Caco-2 (cell line): ENCODE measurements at regions of chr6 and their contacts with region 1.

Region 1: DNA sequence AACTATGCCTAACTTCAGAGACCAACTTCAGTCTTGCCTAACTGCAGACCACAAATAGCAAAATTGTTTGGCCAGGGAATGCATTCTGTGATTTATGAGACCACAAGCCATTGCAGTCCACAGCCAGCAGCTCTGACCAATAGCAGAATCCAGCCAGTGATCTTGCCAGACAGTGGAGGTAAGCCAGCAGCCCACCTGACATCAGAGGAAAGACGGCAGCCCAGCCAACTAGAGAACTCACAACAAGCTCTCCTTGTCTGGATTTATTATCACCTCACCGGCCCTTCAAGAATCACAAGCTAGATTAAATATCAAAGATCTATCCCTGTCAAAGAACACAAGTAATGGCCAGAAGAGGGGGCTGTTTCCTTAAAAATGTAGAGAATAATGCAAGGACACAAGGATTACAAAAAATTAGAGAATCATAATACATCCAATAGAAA is 66.5 kb upstream of the SLC35F1 start:
- DNase-seq: peak in 1 of 2 experiments; percentile 47
- H3K4me3 ChIP-seq: no peak overlapping the region
- H3K4me3 Mint-ChIP-seq: no peak overlapping the region
- H3K27ac Mint-ChIP-seq: no peak overlapping the region
- H3K4me1 ChIP-seq: no peaks in the 10 kb centered on the region
- H3K4me1 Mint-ChIP-seq: no peaks in the 10 kb centered on the region
- H3K27me3 ChIP-seq: no peaks in the 10 kb centered on the region
- H3K27me3 Mint-ChIP-seq: no peaks in the 10 kb centered on the region
- CTCF ChIP-seq: peak; percentile 29 to 41

Region 2: GRCh38 chr6:118263921-118264486 is 423.4 kb after region 1 on chr6:
- CTCF ChIA-PET with region 1: no interaction called
- POLR2A ChIA-PET with region 1: no interaction called
- intact Hi-C with region 1: loop called (anchors 1 kb)
- DNase-seq: peak in 1 of 2 experiments; percentile 17
- H3K4me3 ChIP-seq: no peak overlapping the region
- H3K4me3 Mint-ChIP-seq: no peak overlapping the region
- H3K27ac Mint-ChIP-seq: no peak overlapping the region
- H3K4me1 ChIP-seq: no peaks in the 10 kb centered on the region
- H3K4me1 Mint-ChIP-seq: no peaks in the 10 kb centered on the region
- H3K27me3 ChIP-seq: no peaks in the 10 kb centered on the region
- H3K27me3 Mint-ChIP-seq: peaks cover 3% of the 10 kb centered on the region
- CTCF ChIP-seq: peak in 1 of 2 experiments; percentile 39

Region 3: DNA sequence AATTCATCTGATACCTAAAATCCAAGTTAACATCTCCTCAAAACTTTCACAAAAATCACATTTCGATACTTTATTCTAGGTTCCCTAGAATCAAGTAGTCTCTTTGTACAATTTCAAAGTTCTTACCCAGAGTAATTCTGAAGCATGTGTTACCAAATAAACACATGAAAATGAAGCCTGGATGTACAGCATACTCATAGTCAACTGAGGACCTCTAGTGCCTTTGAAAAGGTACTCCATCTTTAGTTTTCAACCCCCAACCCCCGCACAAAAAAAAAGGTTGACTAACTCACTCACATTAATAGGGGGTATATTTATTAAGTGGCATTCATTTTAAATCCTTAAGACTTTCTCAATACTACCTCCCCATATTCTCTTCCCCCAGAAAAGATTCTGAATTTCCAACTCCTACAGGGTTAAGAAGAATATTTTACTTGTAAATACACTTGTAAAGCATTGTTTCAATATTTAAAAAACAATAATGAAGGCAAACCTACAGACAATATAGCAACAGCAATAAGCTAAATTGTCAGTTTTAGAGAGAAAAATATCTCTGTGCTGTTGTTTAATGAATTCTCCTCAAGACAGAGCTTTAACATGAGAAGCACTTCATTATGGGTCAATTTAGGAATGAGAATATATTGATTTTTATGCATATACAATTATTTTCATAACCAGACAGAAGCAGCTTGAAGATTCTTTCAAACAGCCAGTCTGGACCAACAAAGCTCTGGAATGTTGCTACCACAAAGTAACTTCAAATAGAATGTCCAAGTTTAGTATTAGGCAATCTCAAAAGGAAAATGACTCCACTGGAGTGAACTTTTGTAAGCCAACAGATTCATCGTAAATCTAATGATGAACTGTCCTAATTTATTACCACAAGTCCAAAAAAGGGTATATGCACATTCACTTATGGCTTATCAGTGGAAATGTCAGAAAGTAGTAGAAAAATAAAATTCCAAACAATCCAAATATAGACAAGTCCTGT is 710.8 kb after region 1 on chr6:
- CTCF ChIA-PET with region 1: no interaction called
- POLR2A ChIA-PET with region 1: no interaction called
- intact Hi-C with region 1: loop called (anchors 5 kb)
- DNase-seq: peak in 1 of 2 experiments; percentile 12
- H3K4me3 ChIP-seq: no peak overlapping the region
- H3K4me3 Mint-ChIP-seq: no peak overlapping the region
- H3K27ac Mint-ChIP-seq: no peak overlapping the region
- H3K4me1 ChIP-seq: no peaks in the 10 kb centered on the region
- H3K4me1 Mint-ChIP-seq: no peaks in the 10 kb centered on the region
- H3K27me3 ChIP-seq: no peaks in the 10 kb centered on the region
- H3K27me3 Mint-ChIP-seq: peaks cover 3% of the 10 kb centered on the region
- CTCF ChIP-seq: peak; percentile 35 to 59

Region 4: GRCh38 chr6:118580585-118581419 is 740.2 kb after region 1 on chr6:
- CTCF ChIA-PET with region 1: no interaction called
- POLR2A ChIA-PET with region 1: no interaction called
- intact Hi-C with region 1: loop called (anchors 2 kb)
- DNase-seq: peak; percentile 39 to 50
- H3K4me3 ChIP-seq: no peak overlapping the region
- H3K4me3 Mint-ChIP-seq: no peak overlapping the region
- H3K27ac Mint-ChIP-seq: no peak overlapping the region
- H3K4me1 ChIP-seq: no peaks in the 10 kb centered on the region
- H3K4me1 Mint-ChIP-seq: no peaks in the 10 kb centered on the region
- H3K27me3 ChIP-seq: no peaks in the 10 kb centered on the region
- H3K27me3 Mint-ChIP-seq: no peaks in the 10 kb centered on the region
- CTCF ChIP-seq: peak; percentile 54 to 62